Activated B cell treated with CpG ODN at 0.5 μM for 24 hours (primary cell): ENCODE measurements at regions of chr12 and their contacts with region 1.

Region 1: GRCh38 chr12:94262228-94263010 is 114.0 kb downstream of the PLXNC1 start:
- DNase-seq: peak; percentile 63
- ATAC-seq: peak; percentile 82
- H3K4me3 Mint-ChIP-seq: peak overlapping the region; percentile 97
- H3K27ac Mint-ChIP-seq: peak overlapping the region; percentile 99
- H3K4me1 Mint-ChIP-seq: peaks cover 64% of the 10 kb centered on the region
- H3K27me3 Mint-ChIP-seq: no peaks in the 10 kb centered on the region
- CTCF ChIP-seq: no peak

Region 2: DNA sequence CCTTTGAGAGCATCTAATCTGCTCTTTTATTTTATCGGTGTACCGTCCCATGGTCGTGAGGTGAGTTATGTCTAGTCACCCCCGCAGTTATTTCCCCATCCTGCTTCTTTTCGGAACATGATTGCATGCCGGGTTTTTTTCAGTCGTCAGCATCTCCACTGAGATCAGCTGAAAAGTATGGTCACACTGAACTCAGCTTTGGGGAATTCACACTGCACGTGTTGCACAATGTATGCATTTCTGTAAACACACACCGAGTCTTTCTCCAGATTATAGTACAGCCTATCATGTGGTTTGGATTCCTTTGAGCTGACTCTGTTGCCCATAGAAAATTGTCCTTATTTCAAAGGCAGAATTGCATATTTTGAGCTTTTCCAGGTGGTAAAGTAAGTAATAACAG is 89.4 kb before region 1 on chr12:
- CTCF ChIA-PET with region 1: no interaction called
- POLR2A ChIA-PET with region 1: interaction called, 14 read pairs
- intact Hi-C with region 1: no loop called
- DNase-seq: no peak
- ATAC-seq: no peak
- H3K4me3 Mint-ChIP-seq: no peak overlapping the region
- H3K27ac Mint-ChIP-seq: peak overlapping the region; percentile 30
- H3K4me1 Mint-ChIP-seq: peaks cover 43% of the 10 kb centered on the region
- H3K27me3 Mint-ChIP-seq: no peaks in the 10 kb centered on the region
- CTCF ChIP-seq: no peak

Region 3: DNA sequence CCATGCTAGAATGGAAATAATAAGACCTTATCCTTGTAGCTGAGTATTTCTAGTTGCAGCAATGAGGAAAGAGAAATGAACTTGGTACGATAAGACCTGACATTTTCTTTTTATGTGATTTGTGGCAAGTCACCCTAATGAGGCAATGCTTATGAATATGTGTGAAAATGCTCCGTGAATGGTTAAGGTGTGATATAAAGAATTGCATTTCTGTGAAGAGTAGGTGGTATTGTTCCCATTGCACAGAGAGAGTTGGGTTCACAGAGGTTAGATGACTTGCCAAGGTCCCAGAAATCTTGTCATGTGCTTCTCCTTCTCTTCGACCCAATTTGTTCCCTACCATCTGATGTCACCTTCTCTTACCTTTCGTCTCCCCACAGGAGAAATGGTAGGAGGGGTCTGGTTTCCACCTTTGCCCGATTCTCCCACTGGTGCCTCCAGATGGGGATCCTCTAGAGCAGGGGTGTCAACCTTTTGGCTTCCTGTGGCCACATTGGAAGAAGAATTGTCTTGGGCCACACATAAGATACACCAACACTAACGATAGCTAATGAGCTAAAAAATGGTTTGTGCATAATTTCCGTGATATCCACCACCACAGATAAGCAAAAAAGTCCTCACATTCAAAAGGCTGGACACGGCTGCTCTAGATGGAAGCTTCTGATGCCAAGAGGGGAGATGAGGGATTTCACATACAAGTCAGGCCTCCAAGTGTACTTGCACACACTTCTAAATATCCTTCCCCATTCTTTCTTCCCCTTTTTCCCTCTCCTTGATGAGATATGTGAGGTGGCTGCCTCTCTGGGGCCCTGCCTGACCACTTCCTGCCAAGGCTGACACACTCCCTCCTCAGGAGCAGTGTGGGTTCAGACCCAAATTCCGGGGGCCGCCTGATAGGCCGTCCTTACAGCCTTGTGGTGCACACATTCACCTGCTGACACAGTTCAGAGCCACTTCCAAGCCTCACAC is 18.0 kb before region 1 on chr12:
- CTCF ChIA-PET with region 1: no interaction called
- POLR2A ChIA-PET with region 1: interaction called, 6 read pairs
- intact Hi-C with region 1: loop called (anchors 1 kb)
- DNase-seq: peak; percentile 28
- ATAC-seq: peak; percentile 22
- H3K4me3 Mint-ChIP-seq: peak overlapping the region; percentile 13
- H3K27ac Mint-ChIP-seq: peak overlapping the region; percentile 72
- H3K4me1 Mint-ChIP-seq: peaks cover 66% of the 10 kb centered on the region
- H3K27me3 Mint-ChIP-seq: no peaks in the 10 kb centered on the region
- CTCF ChIP-seq: no peak

Region 4: DNA sequence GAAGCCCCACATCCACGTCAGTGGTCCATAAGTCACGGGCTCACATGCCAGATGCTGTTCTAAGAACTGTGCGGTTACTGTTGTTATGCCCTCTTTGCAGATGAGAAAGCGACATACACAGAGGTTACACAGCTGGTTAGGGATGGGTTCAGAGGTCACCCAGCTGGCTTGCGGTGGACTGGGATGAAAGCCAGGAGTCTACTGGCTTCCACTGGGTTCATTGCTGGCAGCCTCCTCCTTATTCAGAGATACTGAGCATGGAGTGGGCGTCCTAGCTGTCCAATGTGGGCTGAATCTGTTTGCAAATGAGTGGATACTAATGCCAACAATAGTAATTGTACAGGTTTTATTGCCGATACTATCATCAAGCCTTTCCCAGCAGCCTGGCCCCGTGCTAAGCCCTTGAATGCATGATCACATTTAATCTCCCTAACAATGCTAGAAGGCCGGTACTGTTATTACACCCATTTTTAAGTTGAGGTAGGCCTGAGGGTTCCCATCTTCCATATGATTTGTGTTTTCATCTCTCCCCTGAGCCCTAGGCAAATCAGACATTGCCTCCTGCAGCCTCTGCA is 15.1 kb after region 1 on chr12:
- CTCF ChIA-PET with region 1: no interaction called
- POLR2A ChIA-PET with region 1: interaction called, 3 read pairs
- intact Hi-C with region 1: loop called (anchors 2 kb)
- DNase-seq: no peak
- ATAC-seq: no peak
- H3K4me3 Mint-ChIP-seq: no peak overlapping the region
- H3K27ac Mint-ChIP-seq: no peak overlapping the region
- H3K4me1 Mint-ChIP-seq: peaks cover 17% of the 10 kb centered on the region
- H3K27me3 Mint-ChIP-seq: no peaks in the 10 kb centered on the region
- CTCF ChIP-seq: no peak

Region 5: DNA sequence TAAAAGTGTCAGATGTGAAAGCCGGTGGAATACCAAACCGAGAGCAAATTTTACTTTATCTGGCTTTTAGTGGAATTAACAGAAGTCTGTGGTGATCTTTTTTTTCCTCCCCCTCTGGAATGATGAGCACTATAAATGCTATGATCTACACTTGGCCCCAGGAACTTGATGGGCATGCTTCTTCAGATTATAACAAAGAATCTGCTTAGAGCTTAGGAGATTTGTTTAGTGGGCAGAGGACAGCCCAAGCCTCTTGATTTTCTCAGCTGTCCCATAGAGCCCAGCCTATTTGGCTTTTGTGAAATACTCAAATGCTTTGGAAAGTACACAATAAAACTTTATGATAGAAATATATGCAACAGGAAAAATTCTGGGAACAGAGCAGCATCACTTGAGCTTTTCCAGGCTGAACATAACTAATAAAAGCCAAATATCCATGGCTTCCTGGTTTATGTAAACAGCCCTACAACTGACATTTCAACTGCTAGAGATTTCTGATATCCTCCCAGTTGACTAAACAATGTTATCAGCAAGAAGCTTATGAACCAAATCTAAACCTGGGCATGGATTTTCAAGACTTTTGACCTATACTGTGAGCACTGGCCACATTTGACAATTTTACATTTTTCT is 35.6 kb after region 1 on chr12:
- CTCF ChIA-PET with region 1: no interaction called
- POLR2A ChIA-PET with region 1: interaction called, 3 read pairs
- intact Hi-C with region 1: loop called (anchors 1 kb)
- DNase-seq: no peak
- ATAC-seq: no peak
- H3K4me3 Mint-ChIP-seq: peak overlapping the region; percentile 42
- H3K27ac Mint-ChIP-seq: peak overlapping the region; percentile 79
- H3K4me1 Mint-ChIP-seq: peaks cover 56% of the 10 kb centered on the region
- H3K27me3 Mint-ChIP-seq: no peaks in the 10 kb centered on the region
- CTCF ChIP-seq: no peak

Region 6: DNA sequence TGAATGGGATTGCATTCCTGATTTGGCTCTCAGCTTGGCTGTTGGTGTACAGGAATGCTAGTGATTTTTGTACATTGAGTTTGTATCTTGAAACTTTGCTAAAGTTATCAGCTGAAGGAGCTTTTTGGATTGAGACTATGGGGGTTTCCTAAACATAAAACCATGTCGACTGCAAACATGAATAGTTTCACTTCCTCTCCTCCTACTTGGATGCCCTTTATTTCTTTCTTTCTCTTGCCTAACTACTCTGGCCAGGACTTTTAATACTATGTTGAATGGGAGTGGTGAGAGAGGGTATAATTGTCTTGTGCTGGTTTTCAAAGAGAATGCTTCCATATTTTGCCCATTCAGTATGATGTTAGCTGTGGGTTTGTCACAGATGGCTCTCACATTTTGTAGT is 55.8 kb after region 1 on chr12:
- CTCF ChIA-PET with region 1: no interaction called
- POLR2A ChIA-PET with region 1: interaction called, 8 read pairs
- intact Hi-C with region 1: loop called (anchors 1 kb)
- DNase-seq: no peak
- ATAC-seq: peak; percentile 94
- H3K4me3 Mint-ChIP-seq: peak overlapping the region; percentile 59
- H3K27ac Mint-ChIP-seq: peak overlapping the region; percentile 59
- H3K4me1 Mint-ChIP-seq: peaks cover 26% of the 10 kb centered on the region
- H3K27me3 Mint-ChIP-seq: no peaks in the 10 kb centered on the region
- CTCF ChIP-seq: no peak

Region 7: DNA sequence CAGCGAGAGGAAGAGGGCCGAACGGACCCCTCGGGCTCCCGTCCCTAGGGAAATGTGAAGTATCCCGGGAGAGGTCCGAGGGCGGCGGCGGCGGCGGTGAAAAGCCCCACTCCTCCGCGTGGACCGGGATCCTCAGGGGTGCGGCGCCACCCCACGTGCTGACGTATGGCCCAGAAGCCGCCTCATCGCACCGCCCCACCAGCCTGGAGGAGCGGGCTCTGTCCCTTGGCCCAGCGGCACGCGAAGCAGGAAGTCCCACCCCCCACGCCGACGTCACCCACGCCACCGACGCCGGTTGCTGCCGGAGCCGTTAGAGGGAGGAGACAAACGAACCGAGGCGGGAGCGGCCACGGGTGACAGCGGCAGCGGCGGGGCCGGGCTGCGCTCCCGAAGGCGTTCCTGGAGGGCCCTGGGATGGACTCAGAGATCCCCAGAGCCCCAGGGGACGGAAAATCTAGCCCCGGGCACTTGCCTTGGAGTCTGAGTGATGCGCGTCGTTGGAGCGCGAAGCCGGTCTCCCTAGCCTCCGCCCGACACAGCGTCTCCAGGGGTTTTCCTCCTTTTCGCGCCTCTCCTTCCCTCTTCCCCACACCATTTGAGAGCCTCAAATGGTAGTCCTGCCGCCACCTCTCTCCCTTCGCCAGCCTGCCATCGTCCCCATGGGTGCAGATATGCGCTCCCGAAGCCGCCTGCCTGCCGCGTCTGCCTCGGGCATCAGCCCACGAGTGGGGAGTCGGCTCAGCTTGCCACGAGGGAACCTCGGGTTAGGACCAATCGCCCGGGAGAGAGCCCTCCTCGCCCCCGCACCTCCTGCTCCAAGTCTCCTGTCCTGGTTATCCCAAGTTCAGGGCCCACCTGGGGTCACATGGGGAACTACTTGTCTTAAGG is 197.6 kb after region 1 on chr12 and contains the start of gene CEP83:
- CTCF ChIA-PET with region 1: no interaction called
- POLR2A ChIA-PET with region 1: no interaction called
- intact Hi-C with region 1: loop called (anchors 1 kb)
- DNase-seq: peak; percentile 94
- ATAC-seq: peak; percentile 96
- H3K4me3 Mint-ChIP-seq: peak within 1 kb of the TSS; percentile 91
- H3K27ac Mint-ChIP-seq: peak within 1 kb of the TSS; percentile 88
- H3K4me1 Mint-ChIP-seq: peaks cover 23% of the 10 kb centered on the region
- H3K27me3 Mint-ChIP-seq: no peaks in the 10 kb centered on the region
- CTCF ChIP-seq: no peak
- total RNA-seq, gene CEP83: 25.0 and 36.9 TPM in 2 replicates

Region 8: GRCh38 chr12:94674051-94674451 is 411.6 kb after region 1 on chr12:
- CTCF ChIA-PET with region 1: no interaction called
- POLR2A ChIA-PET with region 1: no interaction called
- intact Hi-C with region 1: no loop called
- DNase-seq: no peak
- ATAC-seq: no peak
- H3K4me3 Mint-ChIP-seq: no peak overlapping the region
- H3K27ac Mint-ChIP-seq: no peak overlapping the region
- H3K4me1 Mint-ChIP-seq: peaks cover 39% of the 10 kb centered on the region
- H3K27me3 Mint-ChIP-seq: no peaks in the 10 kb centered on the region
- CTCF ChIP-seq: no peak